Caco-2 (cell line): ENCODE measurements at regions of chr19 and their contacts with region 1.

Region 1: DNA sequence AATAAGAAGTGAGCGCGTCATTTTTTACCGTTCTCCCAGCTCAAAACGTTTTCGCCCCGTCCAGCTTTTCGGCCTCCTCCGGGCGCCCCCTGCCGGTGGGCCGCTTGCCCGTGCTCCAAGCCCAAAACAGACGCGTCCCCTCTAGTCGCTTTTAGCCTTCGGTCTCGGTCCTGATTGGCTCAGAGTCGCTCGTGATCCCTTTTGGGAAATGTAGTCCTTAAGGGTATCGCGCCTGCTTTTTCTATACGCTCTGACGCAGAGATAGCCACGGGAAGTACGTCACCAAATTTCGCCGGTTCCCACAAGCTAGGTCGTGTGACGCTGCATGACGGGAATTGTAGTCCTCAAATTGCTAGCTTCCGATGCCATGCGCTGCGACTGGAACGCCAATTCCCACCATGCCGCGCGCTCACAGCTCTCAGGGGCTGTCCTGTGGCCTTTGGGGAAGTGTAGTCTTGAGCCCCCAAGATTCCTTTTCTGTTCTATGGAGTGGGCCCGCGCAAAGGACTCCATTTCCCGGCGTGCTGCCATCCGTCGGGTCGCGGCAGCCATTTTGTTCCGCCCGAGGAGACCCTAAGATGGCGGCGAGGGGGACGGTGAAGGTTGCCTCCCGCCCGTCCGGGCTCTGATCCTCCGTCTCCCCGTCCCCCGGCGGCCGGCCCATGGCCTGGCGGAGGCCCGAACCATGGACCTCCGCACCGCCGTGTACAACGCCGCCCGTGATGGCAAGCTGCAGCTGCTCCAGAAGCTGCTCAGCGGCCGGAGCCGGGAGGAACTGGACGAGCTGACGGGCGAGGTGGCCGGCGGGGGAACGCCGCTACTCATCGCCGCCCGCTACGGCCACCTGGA is at the start of gene FEM1A:
- DNase-seq: peak; percentile 97 to 99
- H3K4me3 ChIP-seq: peak within 1 kb of the TSS; percentile 98
- H3K4me3 Mint-ChIP-seq: peak within 1 kb of the TSS; percentile 81
- H3K27ac Mint-ChIP-seq: peak within 1 kb of the TSS; percentile 78
- H3K4me1 ChIP-seq: no peaks in the 10 kb centered on the region
- H3K4me1 Mint-ChIP-seq: no peaks in the 10 kb centered on the region
- H3K27me3 ChIP-seq: no peaks in the 10 kb centered on the region
- H3K27me3 Mint-ChIP-seq: no peaks in the 10 kb centered on the region
- CTCF ChIP-seq: peak; percentile 79 to 98
- total RNA-seq, gene FEM1A: 12.9 and 13.4 TPM in 2 replicates

Region 2: DNA sequence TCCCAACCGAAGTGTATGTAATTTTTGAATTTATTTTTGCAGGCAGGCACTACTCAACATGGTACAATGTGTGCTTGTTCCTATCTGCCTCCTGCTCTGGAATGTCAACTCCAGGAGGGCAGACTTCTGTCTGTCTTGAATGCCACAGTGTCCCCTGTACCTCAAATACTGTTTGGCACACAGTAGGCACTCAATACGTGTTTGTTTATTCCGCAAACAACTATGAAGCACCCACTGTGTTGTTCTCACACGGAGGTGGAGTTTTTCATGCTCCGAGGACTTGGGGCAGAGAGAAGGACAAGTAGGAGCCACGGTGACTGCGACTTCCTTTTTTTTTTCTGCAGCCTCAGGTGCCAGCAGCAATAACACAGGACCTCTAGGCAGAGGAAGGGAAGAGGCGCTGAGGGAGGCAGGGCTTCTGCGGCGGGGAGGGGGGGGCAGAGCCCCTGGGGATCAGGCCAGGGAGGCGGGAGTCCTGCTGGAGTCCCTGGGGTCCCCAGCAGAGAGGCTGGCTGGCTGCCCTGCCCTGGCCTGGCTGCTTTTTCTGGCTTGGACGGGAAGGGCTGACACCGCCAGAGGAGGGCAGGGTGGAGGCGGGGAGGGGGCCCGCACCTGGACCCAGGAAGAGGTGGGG is 181.4 kb before region 1 on chr19:
- CTCF ChIA-PET with region 1: no interaction called
- POLR2A ChIA-PET with region 1: interaction called, 12 read pairs
- intact Hi-C with region 1: no loop called
- DNase-seq: no peak
- H3K4me3 ChIP-seq: no peak overlapping the region
- H3K4me3 Mint-ChIP-seq: no peak overlapping the region
- H3K27ac Mint-ChIP-seq: no peak overlapping the region
- H3K4me1 ChIP-seq: no peaks in the 10 kb centered on the region
- H3K4me1 Mint-ChIP-seq: peaks cover 10% of the 10 kb centered on the region
- H3K27me3 ChIP-seq: no peaks in the 10 kb centered on the region
- H3K27me3 Mint-ChIP-seq: peaks cover 2% of the 10 kb centered on the region
- CTCF ChIP-seq: no peak

Region 3: GRCh38 chr19:4723367-4724187 is 67.8 kb before region 1 on chr19 and contains the start of gene DPP9:
- CTCF ChIA-PET with region 1: interaction called, 31 read pairs
- POLR2A ChIA-PET with region 1: interaction called, 7 read pairs
- intact Hi-C with region 1: loop called (anchors 2 kb)
- DNase-seq: peak; percentile 97
- H3K4me3 ChIP-seq: peak within 1 kb of the TSS; percentile 99
- H3K4me3 Mint-ChIP-seq: peak within 1 kb of the TSS; percentile 98
- H3K27ac Mint-ChIP-seq: peak within 1 kb of the TSS; percentile 86
- H3K4me1 ChIP-seq: 0 out of 2 replicates have a peak, but pooled peaks cover 5% of the 10 kb centered on the region
- H3K4me1 Mint-ChIP-seq: peaks cover 15% of the 10 kb centered on the region
- H3K27me3 ChIP-seq: no peaks in the 10 kb centered on the region
- H3K27me3 Mint-ChIP-seq: no peaks in the 10 kb centered on the region
- CTCF ChIP-seq: peak; percentile 20 to 24
- total RNA-seq, gene DPP9: 63.2 and 71.4 TPM in 2 replicates

Region 4: DNA sequence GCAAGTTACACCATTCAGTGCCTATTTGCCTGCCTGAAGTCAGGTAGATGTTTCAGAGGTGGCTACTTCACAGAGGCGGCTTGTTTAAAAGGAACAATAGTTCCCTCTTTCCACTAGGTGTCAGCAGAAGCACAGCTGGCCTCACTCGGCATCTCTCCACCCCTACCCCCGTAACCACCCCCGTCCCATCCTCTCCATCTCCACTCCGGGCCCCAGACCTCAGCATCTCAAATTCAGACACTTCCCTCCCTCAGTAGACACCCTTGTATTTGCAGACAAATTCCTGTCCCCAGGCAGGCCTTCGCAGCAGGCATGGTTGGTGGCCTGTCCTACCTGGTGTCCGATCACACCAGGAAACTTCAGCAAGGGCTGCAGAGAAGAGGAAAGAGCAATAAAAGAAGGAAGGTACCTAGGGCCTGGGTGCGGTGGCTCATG is 58.7 kb before region 1 on chr19:
- CTCF ChIA-PET with region 1: interaction called, 67 read pairs
- POLR2A ChIA-PET with region 1: no interaction called
- intact Hi-C with region 1: loop called (anchors 1 kb)
- DNase-seq: peak; percentile 69 to 75
- H3K4me3 ChIP-seq: no peak overlapping the region
- H3K4me3 Mint-ChIP-seq: no peak overlapping the region
- H3K27ac Mint-ChIP-seq: no peak overlapping the region
- H3K4me1 ChIP-seq: no peaks in the 10 kb centered on the region
- H3K4me1 Mint-ChIP-seq: peaks cover 5% of the 10 kb centered on the region
- H3K27me3 ChIP-seq: no peaks in the 10 kb centered on the region
- H3K27me3 Mint-ChIP-seq: peaks cover 6% of the 10 kb centered on the region
- CTCF ChIP-seq: peak; percentile 75 to 76

Region 5: GRCh38 chr19:4742723-4743646 is 48.4 kb before region 1 on chr19:
- CTCF ChIA-PET with region 1: interaction called, 7 read pairs
- POLR2A ChIA-PET with region 1: interaction called, 12 read pairs
- intact Hi-C with region 1: no loop called
- DNase-seq: no peak
- H3K4me3 ChIP-seq: no peak overlapping the region
- H3K4me3 Mint-ChIP-seq: no peak overlapping the region
- H3K27ac Mint-ChIP-seq: no peak overlapping the region
- H3K4me1 ChIP-seq: no peaks in the 10 kb centered on the region
- H3K4me1 Mint-ChIP-seq: no peaks in the 10 kb centered on the region
- H3K27me3 ChIP-seq: no peaks in the 10 kb centered on the region
- H3K27me3 Mint-ChIP-seq: peaks cover 15% of the 10 kb centered on the region
- CTCF ChIP-seq: no peak

Region 6: DNA sequence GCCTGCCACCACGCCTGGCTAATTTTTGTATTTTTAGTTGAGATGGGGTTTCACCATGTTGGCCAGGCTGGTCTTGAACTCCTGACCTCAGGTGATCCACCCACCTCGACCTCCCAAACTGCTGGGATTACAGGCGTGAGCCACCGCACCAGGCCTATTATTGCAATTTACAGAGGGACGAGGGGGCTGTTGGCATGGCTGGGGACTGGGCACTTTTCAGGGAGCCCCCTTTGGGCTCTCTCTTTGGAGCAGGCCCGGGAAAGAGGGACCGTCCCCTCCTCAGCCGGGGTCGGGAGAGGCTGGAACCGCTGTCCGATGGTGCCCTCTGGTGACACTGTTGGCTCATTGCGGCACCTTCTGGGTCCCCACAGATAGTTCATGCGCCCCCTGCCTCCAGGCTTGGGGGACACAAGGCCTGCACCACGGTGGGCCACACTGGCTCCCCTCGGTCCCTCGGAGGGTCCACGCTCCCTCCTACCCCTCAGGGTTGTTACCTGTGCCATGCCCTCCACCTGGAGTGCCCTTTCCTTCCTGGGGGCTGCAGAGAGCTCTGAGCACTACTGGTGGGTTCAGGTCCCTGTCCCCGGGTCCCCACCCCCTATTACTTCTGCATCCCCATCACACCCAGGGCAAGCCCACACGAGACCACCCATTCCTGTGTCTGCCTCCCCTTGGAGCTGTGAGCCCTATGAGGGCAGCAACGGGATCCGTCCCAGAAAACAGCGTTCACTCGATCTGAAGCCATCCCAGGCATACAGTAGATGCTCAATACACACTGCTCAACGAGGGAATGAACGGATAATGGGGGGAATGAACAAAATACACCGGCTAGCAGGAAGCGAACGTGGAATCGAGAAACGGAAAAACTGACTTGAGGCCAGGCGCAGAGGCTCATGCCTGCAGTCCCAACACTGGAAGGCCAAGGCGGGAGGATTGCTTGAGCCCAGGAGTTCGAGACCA is 12.6 kb after region 1 on chr19:
- CTCF ChIA-PET with region 1: interaction called, 15 read pairs
- POLR2A ChIA-PET with region 1: interaction called, 3 read pairs
- intact Hi-C with region 1: loop called (anchors 1 kb)
- DNase-seq: peak; percentile 69 to 84
- H3K4me3 ChIP-seq: no peak overlapping the region
- H3K4me3 Mint-ChIP-seq: no peak overlapping the region
- H3K27ac Mint-ChIP-seq: no peak overlapping the region
- H3K4me1 ChIP-seq: peaks cover 6% of the 10 kb centered on the region; the same call in 1 of the 2 replicates
- H3K4me1 Mint-ChIP-seq: no peaks in the 10 kb centered on the region
- H3K27me3 ChIP-seq: no peaks in the 10 kb centered on the region
- H3K27me3 Mint-ChIP-seq: no peaks in the 10 kb centered on the region
- CTCF ChIP-seq: peak; percentile 91 to 92

Region 7: GRCh38 chr19:4867534-4868285 is 76.3 kb after region 1 on chr19 and contains the start of gene PLIN3:
- CTCF ChIA-PET with region 1: interaction called, 10 read pairs
- POLR2A ChIA-PET with region 1: no interaction called
- intact Hi-C with region 1: no loop called
- DNase-seq: peak; percentile 94 to 95
- H3K4me3 ChIP-seq: peak within 1 kb of the TSS; percentile 89
- H3K4me3 Mint-ChIP-seq: peak within 1 kb of the TSS; percentile 74
- H3K27ac Mint-ChIP-seq: peak within 1 kb of the TSS; percentile 59
- H3K4me1 ChIP-seq: peaks cover 7% of the 10 kb centered on the region; the same call in 1 of the 2 replicates
- H3K4me1 Mint-ChIP-seq: peaks cover 6% of the 10 kb centered on the region
- H3K27me3 ChIP-seq: no peaks in the 10 kb centered on the region
- H3K27me3 Mint-ChIP-seq: no peaks in the 10 kb centered on the region
- CTCF ChIP-seq: no peak
- total RNA-seq, gene PLIN3: 60.2 and 63.8 TPM in 2 replicates